ENCODE measurements at regions of chr7 and their contacts with region 1.

Region 1: GRCh38 chr7:93902777-93903423 is 3.5 kb upstream of the GNGT1 start:
- DNase-seq: no peak
- H3K4me3 ChIP-seq: no peak overlapping the region
- H3K27ac ChIP-seq: no peak overlapping the region
- H3K4me1 ChIP-seq: no peaks in the 10 kb centered on the region
- H3K27me3 ChIP-seq: peaks cover 6% of the 10 kb centered on the region
- CTCF ChIP-seq: peak; percentile 68 to 80

Region 2: DNA sequence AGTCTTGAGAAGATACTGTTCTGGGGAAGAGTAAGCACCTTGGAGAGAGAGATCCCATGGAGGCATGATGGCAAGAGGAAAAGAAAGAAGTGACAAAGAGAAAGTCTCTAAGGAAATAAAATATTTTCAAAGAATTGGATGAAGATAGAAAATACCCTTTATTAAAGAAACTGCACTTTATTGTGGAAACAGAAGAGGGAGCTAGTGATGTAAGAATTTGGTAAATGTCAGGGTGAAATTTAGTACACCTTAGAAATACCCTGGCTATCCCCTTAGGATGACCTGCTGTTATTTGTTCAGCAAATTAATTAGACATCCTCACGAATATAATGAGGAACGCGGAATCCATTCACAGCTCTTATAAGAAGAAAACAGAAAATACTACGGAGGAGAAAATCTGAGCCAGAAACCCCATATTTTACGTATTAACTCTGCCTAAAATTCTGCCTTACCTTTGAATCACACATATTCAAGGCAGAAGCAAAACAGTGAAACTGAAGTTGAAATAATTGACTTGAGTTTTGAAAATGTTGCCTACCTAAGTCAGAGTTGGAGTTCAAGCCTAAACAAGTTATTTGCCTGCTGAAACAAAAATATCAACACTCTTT is 103.0 kb before region 1 on chr7:
- CTCF ChIA-PET with region 1: no interaction called
- dilution Hi-C with region 1: no loop called
- in situ Hi-C with region 1: no loop called
- intact Hi-C with region 1: loop called (anchors 1 kb)
- DNase-seq: peak; percentile 12
- H3K4me3 ChIP-seq: no peak overlapping the region
- H3K27ac ChIP-seq: no peak overlapping the region
- H3K4me1 ChIP-seq: no peaks in the 10 kb centered on the region
- H3K27me3 ChIP-seq: peaks cover under 1% of the 10 kb centered on the region
- CTCF ChIP-seq: peak; percentile 60 to 64

Region 3: GRCh38 chr7:93980744-93981479 is 78.0 kb after region 1 on chr7:
- CTCF ChIA-PET with region 1: no interaction called
- dilution Hi-C with region 1: no loop called
- in situ Hi-C with region 1: no loop called
- intact Hi-C with region 1: no loop called
- DNase-seq: no peak
- H3K4me3 ChIP-seq: no peak overlapping the region
- H3K27ac ChIP-seq: no peak overlapping the region
- H3K4me1 ChIP-seq: no peaks in the 10 kb centered on the region
- H3K27me3 ChIP-seq: no peaks in the 10 kb centered on the region
- CTCF ChIP-seq: no peak

Region 4: GRCh38 chr7:94004024-94004951 is 101.4 kb after region 1 on chr7 and contains the start of gene BET1:
- CTCF ChIA-PET with region 1: no interaction called
- dilution Hi-C with region 1: no loop called
- in situ Hi-C with region 1: no loop called
- intact Hi-C with region 1: loop called (anchors 10 kb)
- DNase-seq: peak; percentile 93
- H3K4me3 ChIP-seq: peak within 1 kb of the TSS; percentile 71 to 79 (median 74)
- H3K27ac ChIP-seq: peak within 1 kb of the TSS; percentile 79
- H3K4me1 ChIP-seq: no peaks in the 10 kb centered on the region
- H3K27me3 ChIP-seq: no peaks in the 10 kb centered on the region
- CTCF ChIP-seq: no peak
- total RNA-seq, gene BET1: 20.8 to 29.0 TPM

Region 5: DNA sequence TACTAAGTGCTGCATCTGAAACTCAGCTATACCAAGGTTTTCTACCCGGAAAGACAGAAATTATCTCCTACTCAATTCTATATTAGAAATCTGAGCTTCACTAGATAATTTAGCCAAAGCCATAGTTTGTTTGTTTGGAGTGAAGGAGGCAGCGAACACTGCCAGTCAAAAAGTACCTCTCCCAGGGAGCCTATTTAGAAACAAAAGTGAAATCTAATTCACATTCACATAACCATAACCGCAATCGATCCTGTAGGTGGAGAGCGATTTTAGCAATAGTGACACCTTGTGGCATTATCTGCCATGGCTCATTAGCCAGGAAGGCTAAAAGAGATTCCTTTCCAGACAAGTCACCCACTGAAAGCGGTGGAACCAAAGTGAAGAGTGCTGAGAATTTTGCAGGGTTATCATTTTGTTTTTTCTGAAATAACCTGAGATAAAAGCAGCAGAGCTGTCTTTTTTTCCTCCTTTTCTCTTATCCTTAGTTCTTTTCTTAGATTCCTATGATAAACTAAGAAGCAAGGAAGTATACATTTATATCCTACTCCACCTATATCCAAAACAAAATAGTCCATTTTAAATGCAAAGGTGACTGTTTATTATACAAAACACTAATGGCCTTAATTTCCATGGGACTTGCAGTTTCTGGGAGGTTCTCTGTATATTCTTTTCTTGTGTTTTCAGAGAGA is 184.9 kb after region 1 on chr7:
- CTCF ChIA-PET with region 1: interaction called, 3 read pairs
- dilution Hi-C with region 1: no loop called
- in situ Hi-C with region 1: loop called (anchors 5 to 10 kb)
- intact Hi-C with region 1: loop called (anchors 1 kb)
- DNase-seq: peak; percentile 62
- H3K4me3 ChIP-seq: no peak overlapping the region
- H3K27ac ChIP-seq: no peak overlapping the region
- H3K4me1 ChIP-seq: no peaks in the 10 kb centered on the region
- H3K27me3 ChIP-seq: peaks cover 8% of the 10 kb centered on the region
- CTCF ChIP-seq: peak; percentile 82 to 86

Region 6: GRCh38 chr7:94095316-94096009 is 192.6 kb after region 1 on chr7:
- CTCF ChIA-PET with region 1: no interaction called
- dilution Hi-C with region 1: no loop called
- in situ Hi-C with region 1: loop called in 1 of 2 experiments (anchors 10 kb)
- intact Hi-C with region 1: no loop called
- DNase-seq: no peak
- H3K4me3 ChIP-seq: no peak overlapping the region
- H3K27ac ChIP-seq: no peak overlapping the region
- H3K4me1 ChIP-seq: no peaks in the 10 kb centered on the region
- H3K27me3 ChIP-seq: peaks cover 10% of the 10 kb centered on the region
- CTCF ChIP-seq: no peak

Measured in mammary epithelial cell (primary cell).